IMR-90 (cell line): ENCODE measurements at regions of chr18 and their contacts with region 1.

Region 1: GRCh38 chr18:59308248-59308937 is 10.1 kb downstream of the CPLX4 start:
- DNase-seq: peak; percentile 45
- ATAC-seq: peak; percentile 100
- H3K4me3 ChIP-seq: peak overlapping the region; percentile 39
- H3K27ac ChIP-seq: no peak overlapping the region
- H3K4me1 ChIP-seq: peaks cover 2% of the 10 kb centered on the region; the same call in 1 of the 2 replicates
- H3K27me3 ChIP-seq: peaks cover 62% of the 10 kb centered on the region
- CTCF ChIP-seq: peak; percentile 80
- POLR2A ChIP-seq: no peak
- RAD21 ChIP-seq: peak; percentile 73

Region 2: GRCh38 chr18:58864146-58865032 is 444.0 kb before region 1 on chr18 and contains the start of gene ZNF532:
- CTCF ChIA-PET with region 1: no interaction called
- POLR2A ChIA-PET with region 1: no interaction called
- dilution Hi-C with region 1: no loop called
- in situ Hi-C with region 1: no loop called
- intact Hi-C with region 1: no loop called
- DNase-seq: peak; percentile 82
- ATAC-seq: peak; percentile 50
- H3K4me3 ChIP-seq: peak within 1 kb of the TSS; percentile 39
- H3K27ac ChIP-seq: peak within 1 kb of the TSS; percentile 98
- H3K4me1 ChIP-seq: peaks cover 34% of the 10 kb centered on the region
- H3K27me3 ChIP-seq: no peaks in the 10 kb centered on the region
- CTCF ChIP-seq: no peak
- POLR2A ChIP-seq: peak; percentile 28; the same call in 1 of the 2 replicates
- RAD21 ChIP-seq: no peak; the same call in 1 of the 2 replicates
- total RNA-seq, gene ZNF532: 29.9 and 30.0 TPM in 2 replicates

Region 3: GRCh38 chr18:59249205-59249774 is 59.1 kb before region 1 on chr18:
- CTCF ChIA-PET with region 1: interaction called, 6 read pairs
- POLR2A ChIA-PET with region 1: no interaction called
- dilution Hi-C with region 1: no loop called
- in situ Hi-C with region 1: no loop called
- intact Hi-C with region 1: loop called (anchors 1 kb)
- DNase-seq: peak; percentile 80
- ATAC-seq: peak; percentile 98
- H3K4me3 ChIP-seq: no peak overlapping the region
- H3K27ac ChIP-seq: no peak overlapping the region
- H3K4me1 ChIP-seq: no peaks in the 10 kb centered on the region
- H3K27me3 ChIP-seq: peaks cover 20% of the 10 kb centered on the region
- CTCF ChIP-seq: peak; percentile 77
- POLR2A ChIP-seq: no peak
- RAD21 ChIP-seq: peak; percentile 71

Region 4: DNA sequence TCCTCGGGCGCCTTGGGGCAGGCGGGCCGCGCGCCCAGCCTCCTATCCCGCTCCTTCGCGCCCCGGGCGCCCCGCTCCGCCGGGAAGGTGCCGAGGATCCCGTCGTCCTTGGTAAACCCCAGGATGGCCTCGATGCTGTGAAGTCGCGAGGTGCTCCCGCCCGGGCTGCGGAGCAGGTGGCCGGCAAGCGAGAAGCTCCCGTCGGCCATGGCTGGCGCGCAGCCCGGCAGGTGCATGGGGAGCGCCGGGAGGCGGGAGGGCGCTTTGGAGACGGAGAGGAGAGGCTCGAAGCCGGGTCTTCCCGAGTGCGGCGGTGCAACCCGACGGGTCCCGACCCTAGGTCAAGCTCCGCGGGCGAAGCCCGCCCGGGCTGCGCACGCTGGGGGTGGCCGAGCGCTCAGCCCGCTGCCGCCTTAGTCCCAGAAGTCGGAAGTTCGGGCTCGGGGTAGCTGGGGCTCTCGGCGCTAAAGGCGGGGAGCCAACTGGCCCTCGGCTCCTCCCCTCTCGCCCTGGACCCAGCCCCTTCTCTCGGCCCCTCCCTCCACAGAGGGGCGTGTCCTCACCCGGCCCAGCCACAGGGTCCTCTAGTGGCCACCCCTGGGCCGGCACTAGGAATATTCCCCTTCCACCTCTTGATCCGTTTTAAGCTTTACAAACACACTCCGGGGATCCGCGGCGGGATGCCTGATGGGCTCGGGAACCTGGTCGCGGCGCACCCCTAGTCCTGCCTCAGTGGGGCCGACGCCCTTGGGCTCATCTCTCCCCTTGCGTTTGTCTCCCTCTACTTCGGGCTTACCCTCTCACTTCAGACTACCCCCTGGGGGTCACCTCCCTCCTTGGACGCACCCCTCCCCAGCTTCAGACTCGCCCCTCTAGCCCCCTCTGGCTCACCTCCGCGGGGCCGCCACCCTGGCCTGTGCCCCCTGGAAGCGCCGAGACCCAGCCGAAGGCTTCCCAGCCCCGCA is 35.1 kb before region 1 on chr18 and contains the start of gene RAX:
- CTCF ChIA-PET with region 1: no interaction called
- POLR2A ChIA-PET with region 1: no interaction called
- dilution Hi-C with region 1: no loop called
- in situ Hi-C with region 1: no loop called
- intact Hi-C with region 1: no loop called
- DNase-seq: no peak
- ATAC-seq: peak; percentile 49
- H3K4me3 ChIP-seq: no peak within 1 kb of the TSS; the same call in 1 of the 2 replicates
- H3K27ac ChIP-seq: no peak within 1 kb of the TSS
- H3K4me1 ChIP-seq: no peaks in the 10 kb centered on the region
- H3K27me3 ChIP-seq: peaks cover 93% of the 10 kb centered on the region
- CTCF ChIP-seq: peak; percentile 17; the same call in 1 of the 2 replicates
- POLR2A ChIP-seq: no peak
- RAD21 ChIP-seq: no peak
- total RNA-seq, gene RAX: not detected in 2 replicates

Region 5: DNA sequence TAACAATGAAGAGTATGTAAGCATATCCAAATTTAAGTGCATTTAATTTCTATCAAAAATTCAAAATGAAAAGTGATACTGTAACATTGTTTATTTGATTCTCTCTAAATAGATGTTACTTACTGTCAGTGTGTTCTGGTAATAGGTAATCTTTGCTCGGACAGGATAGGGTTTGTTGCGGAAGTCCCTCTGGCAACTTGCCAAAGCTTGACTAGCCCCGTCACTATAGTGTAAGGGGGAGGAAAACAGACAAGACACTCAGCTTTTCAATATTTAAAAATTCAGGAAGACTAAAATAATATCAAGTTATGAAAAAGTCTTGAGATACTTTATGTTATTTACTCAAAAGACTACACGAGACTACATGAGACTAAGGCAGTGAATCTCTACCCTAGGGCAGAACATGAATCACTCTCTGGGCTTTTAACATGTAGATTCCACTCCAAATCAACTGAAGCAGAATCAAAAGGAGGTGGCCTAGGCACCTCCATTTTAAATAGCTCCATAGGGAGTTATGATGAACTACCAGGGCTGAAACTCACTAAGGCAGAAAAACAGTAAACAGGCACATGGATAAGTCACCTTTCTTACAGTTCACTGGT is 44.8 kb after region 1 on chr18:
- CTCF ChIA-PET with region 1: interaction called, 16 read pairs
- POLR2A ChIA-PET with region 1: no interaction called
- dilution Hi-C with region 1: no loop called
- in situ Hi-C with region 1: no loop called
- intact Hi-C with region 1: no loop called
- DNase-seq: no peak
- ATAC-seq: no peak
- H3K4me3 ChIP-seq: no peak overlapping the region
- H3K27ac ChIP-seq: no peak overlapping the region
- H3K4me1 ChIP-seq: no peaks in the 10 kb centered on the region; the same call in 1 of the 2 replicates
- H3K27me3 ChIP-seq: no peaks in the 10 kb centered on the region
- CTCF ChIP-seq: no peak
- POLR2A ChIP-seq: no peak
- RAD21 ChIP-seq: no peak

Region 6: GRCh38 chr18:59395226-59396110 is 87.1 kb after region 1 on chr18:
- CTCF ChIA-PET with region 1: no interaction called
- POLR2A ChIA-PET with region 1: no interaction called
- dilution Hi-C with region 1: no loop called
- in situ Hi-C with region 1: loop called (anchors 5 kb)
- intact Hi-C with region 1: no loop called
- DNase-seq: no peak
- ATAC-seq: no peak
- H3K4me3 ChIP-seq: no peak overlapping the region
- H3K27ac ChIP-seq: no peak overlapping the region
- H3K4me1 ChIP-seq: no peaks in the 10 kb centered on the region
- H3K27me3 ChIP-seq: peaks cover 5% of the 10 kb centered on the region
- CTCF ChIP-seq: no peak
- POLR2A ChIP-seq: no peak
- RAD21 ChIP-seq: no peak

Region 7: DNA sequence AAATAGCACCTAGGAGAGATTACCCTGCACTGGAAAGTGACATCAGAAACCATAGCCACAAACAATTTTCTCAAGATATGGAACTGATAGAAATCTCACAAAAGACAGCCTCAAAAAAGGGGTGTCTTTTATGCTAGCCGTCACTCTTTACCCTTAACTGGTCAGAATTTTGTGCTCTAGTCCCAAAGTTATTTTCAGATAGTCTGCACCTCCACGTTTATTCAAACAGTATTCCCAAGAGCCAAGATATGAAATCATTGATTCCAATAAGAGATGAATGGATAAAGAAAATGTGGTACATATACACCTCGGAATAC is 567.9 kb after region 1 on chr18:
- CTCF ChIA-PET with region 1: no interaction called
- POLR2A ChIA-PET with region 1: no interaction called
- dilution Hi-C with region 1: no loop called
- in situ Hi-C with region 1: no loop called
- intact Hi-C with region 1: no loop called
- DNase-seq: no peak
- ATAC-seq: no peak
- H3K4me3 ChIP-seq: no peak overlapping the region
- H3K27ac ChIP-seq: no peak overlapping the region
- H3K4me1 ChIP-seq: peaks cover 7% of the 10 kb centered on the region
- H3K27me3 ChIP-seq: no peaks in the 10 kb centered on the region
- CTCF ChIP-seq: no peak
- POLR2A ChIP-seq: no peak
- RAD21 ChIP-seq: no peak